Calu3 (cell line): ENCODE measurements at regions of chr2 and their contacts with region 1.

Region 1: DNA sequence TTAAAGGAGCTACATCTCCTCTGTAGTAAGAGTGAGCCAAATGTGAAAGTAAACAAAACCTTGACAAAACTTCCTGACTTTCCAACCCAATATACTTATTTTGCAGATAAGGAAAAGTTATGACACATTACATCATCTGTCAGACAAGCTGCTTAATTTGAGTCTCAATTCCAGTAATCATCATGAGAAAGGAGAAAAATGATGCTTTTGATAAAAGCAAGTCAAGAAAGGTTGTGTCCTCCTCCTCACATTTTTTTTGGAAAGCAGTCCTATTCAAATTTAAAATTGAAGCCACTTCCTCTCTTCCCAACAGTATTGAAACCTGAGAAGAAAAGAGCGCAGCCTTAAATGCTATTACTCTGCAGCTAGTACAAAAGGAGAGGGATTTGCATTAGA is 519.6 kb downstream of the LRP1B start:
- DNase-seq: no peak
- H3K4me3 Mint-ChIP-seq: peak overlapping the region; percentile 34
- H3K27ac Mint-ChIP-seq: peak overlapping the region; percentile 69
- H3K4me1 Mint-ChIP-seq: peaks cover 14% of the 10 kb centered on the region
- H3K27me3 Mint-ChIP-seq: no peaks in the 10 kb centered on the region
- CTCF ChIP-seq: no peak

Region 2: GRCh38 chr2:141423124-141423523 is 188.1 kb before region 1 on chr2:
- CTCF ChIA-PET with region 1: no interaction called
- intact Hi-C with region 1: no loop called
- DNase-seq: no peak
- H3K4me3 Mint-ChIP-seq: no peak overlapping the region
- H3K27ac Mint-ChIP-seq: no peak overlapping the region
- H3K4me1 Mint-ChIP-seq: no peaks in the 10 kb centered on the region
- H3K27me3 Mint-ChIP-seq: no peaks in the 10 kb centered on the region
- CTCF ChIP-seq: no peak

Region 3: GRCh38 chr2:141639809-141640208 is 28.6 kb after region 1 on chr2:
- CTCF ChIA-PET with region 1: no interaction called
- intact Hi-C with region 1: loop called (anchors 1 kb)
- DNase-seq: no peak
- H3K4me3 Mint-ChIP-seq: no peak overlapping the region
- H3K27ac Mint-ChIP-seq: no peak overlapping the region
- H3K4me1 Mint-ChIP-seq: no peaks in the 10 kb centered on the region
- H3K27me3 Mint-ChIP-seq: no peaks in the 10 kb centered on the region
- CTCF ChIP-seq: no peak